ENCODE measurements at regions of chr10 and their contacts with region 1.

Region 1: GRCh38 chr10:62183442-62183841 is 85.2 kb downstream of the RTKN2 start:
- DNase-seq: peak in 10 of 14 experiments; percentile 16 to 92 (median 37)
- ATAC-seq: peak; percentile 85
- H3K4me3 ChIP-seq: no peak overlapping the region
- H3K4me3 Mint-ChIP-seq: peak overlapping the region; percentile 21
- H3K27ac ChIP-seq: peak overlapping the region; percentile 37 to 38
- H3K27ac Mint-ChIP-seq: peak overlapping the region; percentile 86
- H3K4me1 ChIP-seq: peaks cover 45% of the 10 kb centered on the region
- H3K4me1 Mint-ChIP-seq: peaks cover 91% of the 10 kb centered on the region
- H3K27me3 ChIP-seq: no peaks in the 10 kb centered on the region
- H3K27me3 Mint-ChIP-seq: no peaks in the 10 kb centered on the region
- CTCF ChIP-seq: no peak

Region 2: DNA sequence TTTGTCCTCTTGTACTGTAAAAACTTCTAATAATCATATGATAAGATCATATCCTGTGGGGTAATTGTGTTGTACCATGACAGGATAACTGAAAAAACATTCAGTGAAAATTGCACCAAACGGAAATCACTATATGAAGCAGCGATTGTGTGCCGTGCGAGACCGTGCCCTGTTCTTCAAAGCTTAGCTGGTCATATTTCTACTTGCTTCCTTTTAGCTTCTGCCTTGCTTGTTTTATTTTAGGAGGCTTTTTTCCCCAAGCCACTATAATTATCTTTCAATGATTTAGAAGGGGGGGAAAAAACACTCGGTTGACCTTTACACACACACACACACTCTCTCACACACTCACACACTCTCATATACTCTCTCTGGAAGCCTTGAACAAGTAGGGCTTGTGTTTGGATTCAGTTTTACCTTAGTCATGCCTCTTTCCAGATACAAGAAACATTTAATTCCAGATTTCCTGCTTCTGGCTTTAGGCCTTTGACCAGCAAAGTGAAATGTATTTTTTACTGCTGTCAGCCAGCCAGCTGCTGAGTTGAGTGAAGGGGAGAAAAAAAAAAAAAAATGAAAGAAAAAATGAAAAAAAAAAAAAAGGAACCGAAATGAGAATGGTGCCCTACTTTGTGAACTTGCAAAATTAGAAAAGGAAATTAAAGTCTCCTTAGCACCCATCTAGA is 100.6 kb before region 1 on chr10:
- CTCF ChIA-PET with region 1: no interaction called
- POLR2A ChIA-PET with region 1: interaction called, 12 read pairs
- intact Hi-C with region 1: no loop called
- DNase-seq: peak in 12 of 14 experiments; percentile 17 to 83 (median 36)
- ATAC-seq: peak; percentile 88
- H3K4me3 ChIP-seq: peak overlapping the region; percentile 32
- H3K4me3 Mint-ChIP-seq: peak overlapping the region; percentile 42
- H3K27ac ChIP-seq: peak overlapping the region; percentile 31 to 80
- H3K27ac Mint-ChIP-seq: peak overlapping the region; percentile 82
- H3K4me1 ChIP-seq: peaks cover 34% of the 10 kb centered on the region
- H3K4me1 Mint-ChIP-seq: peaks cover 65% of the 10 kb centered on the region
- H3K27me3 ChIP-seq: no peaks in the 10 kb centered on the region
- H3K27me3 Mint-ChIP-seq: no peaks in the 10 kb centered on the region
- CTCF ChIP-seq: no peak

Region 3: DNA sequence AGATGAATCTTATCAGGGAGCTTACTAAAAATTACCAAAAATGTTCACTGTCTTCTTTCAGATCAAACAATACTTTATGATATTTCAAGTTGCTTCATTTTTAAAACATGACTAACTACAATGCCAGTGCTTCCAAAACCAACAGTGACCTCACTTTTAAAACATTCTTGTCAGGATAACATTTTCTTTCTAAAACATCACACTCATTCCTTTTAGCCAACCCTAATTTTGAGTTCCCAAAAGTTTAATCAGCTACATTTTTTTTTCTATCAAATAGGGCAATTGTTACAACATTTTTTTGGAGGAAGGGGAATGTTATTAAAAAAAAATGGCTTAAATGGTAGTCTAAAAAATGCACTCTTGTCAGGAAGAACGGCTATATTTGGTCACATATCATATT is 47.9 kb after region 1 on chr10:
- CTCF ChIA-PET with region 1: no interaction called
- POLR2A ChIA-PET with region 1: no interaction called
- intact Hi-C with region 1: loop called in 1 of 2 experiments (anchors 10 kb)
- DNase-seq: no peak
- ATAC-seq: no peak
- H3K4me3 ChIP-seq: no peak overlapping the region
- H3K4me3 Mint-ChIP-seq: no peak overlapping the region
- H3K27ac ChIP-seq: no peak overlapping the region
- H3K27ac Mint-ChIP-seq: no peak overlapping the region
- H3K4me1 ChIP-seq: peaks cover 4% of the 10 kb centered on the region
- H3K4me1 Mint-ChIP-seq: peaks cover 30% of the 10 kb centered on the region
- H3K27me3 ChIP-seq: no peaks in the 10 kb centered on the region
- H3K27me3 Mint-ChIP-seq: no peaks in the 10 kb centered on the region
- CTCF ChIP-seq: no peak

Region 4: DNA sequence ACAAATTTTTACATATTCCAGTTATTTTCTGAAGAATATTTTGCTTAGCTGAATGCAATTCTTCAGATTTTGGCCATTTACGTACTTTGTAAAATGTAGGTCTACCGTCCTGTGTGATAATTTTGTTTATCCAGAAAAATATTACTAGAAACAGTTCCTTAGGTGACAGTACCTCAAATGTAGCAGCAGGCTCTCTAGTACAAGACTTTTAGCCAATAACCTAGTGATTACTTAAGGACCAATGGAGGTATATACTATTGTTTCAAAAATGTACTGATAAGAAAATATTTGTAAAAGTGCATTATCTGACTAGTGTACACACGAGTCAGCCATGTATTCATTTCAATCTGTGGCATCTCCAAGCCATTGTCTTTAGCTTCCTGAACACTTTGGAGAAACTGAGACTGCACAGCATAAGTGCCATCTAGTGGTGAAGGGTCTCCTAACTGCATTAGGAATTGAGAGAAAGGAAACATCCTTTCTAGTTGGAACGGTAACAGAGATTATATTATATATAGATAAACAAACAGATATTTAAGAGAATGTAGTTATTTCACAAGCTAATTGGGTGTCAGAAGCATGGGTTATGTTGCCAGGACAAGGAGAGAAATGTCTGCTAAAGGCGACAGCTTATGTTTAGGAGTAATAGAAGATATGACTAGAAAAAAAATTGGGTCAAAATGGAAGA is 61.5 kb after region 1 on chr10:
- CTCF ChIA-PET with region 1: interaction called, 11 read pairs
- POLR2A ChIA-PET with region 1: interaction called, 18 read pairs
- intact Hi-C with region 1: loop called in 1 of 2 experiments (anchors 5 kb)
- DNase-seq: peak in 11 of 14 experiments; percentile 15 to 82 (median 35)
- ATAC-seq: peak; percentile 92
- H3K4me3 ChIP-seq: no peak overlapping the region
- H3K4me3 Mint-ChIP-seq: peak overlapping the region; percentile 5
- H3K27ac ChIP-seq: no peak overlapping the region
- H3K27ac Mint-ChIP-seq: peak overlapping the region; percentile 18
- H3K4me1 ChIP-seq: peaks cover 4% of the 10 kb centered on the region
- H3K4me1 Mint-ChIP-seq: peaks cover 39% of the 10 kb centered on the region
- H3K27me3 ChIP-seq: no peaks in the 10 kb centered on the region
- H3K27me3 Mint-ChIP-seq: no peaks in the 10 kb centered on the region
- CTCF ChIP-seq: peak; percentile 92